Activated CD4-positive, alpha-beta T cell treated with anti-CD3 and anti-CD28 coated beads for 36 hours (primary cell): ENCODE measurements at regions of chr2 and their contacts with region 1.

Region 1: DNA sequence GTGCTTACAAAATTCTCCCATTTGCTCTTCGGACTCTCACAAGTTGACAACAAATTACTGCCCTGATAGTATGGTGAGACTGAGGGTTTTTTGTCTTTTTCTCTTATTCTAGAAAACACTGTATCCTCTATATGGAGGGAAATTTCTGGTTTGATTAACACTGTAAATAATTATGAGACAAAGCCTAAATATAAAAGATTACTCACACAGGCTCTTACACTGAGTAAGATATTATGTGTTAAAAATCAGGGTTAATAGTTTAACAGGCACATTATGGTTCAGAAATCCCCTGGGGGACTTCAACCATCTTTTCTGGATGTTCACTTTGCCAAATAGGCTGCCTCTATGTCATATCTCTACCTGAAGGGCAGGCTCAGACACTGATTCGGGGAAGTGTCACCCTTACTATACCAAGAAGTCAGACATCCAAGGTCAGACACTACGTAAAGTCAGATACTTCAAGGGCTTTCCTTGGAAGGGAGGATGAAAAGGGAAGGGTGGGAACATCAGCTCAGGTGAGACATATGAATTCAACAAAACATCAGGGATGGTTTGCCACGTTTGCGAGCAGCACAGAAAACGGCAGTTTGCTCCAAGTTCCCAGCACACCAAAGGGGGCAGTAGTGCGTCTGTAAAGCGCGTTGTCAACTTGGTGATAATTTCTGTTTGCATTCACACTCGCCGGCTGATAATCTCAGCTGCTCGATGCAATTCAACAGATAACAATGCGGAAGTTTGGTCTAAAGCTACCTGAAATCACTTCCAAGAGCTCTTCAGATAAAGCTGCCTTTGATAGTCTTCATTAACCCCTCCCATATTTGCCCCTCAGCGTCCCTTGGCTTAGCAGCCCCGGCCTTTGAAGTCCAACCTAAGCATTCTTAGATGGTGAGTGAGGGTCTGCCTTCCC is 972 bp upstream of the RASGRP3 start:
- DNase-seq: peak; percentile 88
- ATAC-seq: peak; percentile 67
- H3K4me3 Mint-ChIP-seq: peak overlapping the region; percentile 83
- H3K27ac Mint-ChIP-seq: peak overlapping the region; percentile 98
- H3K4me1 Mint-ChIP-seq: peaks cover 32% of the 10 kb centered on the region
- H3K27me3 Mint-ChIP-seq: no peaks in the 10 kb centered on the region

Region 2: GRCh38 chr2:32356735-32357644 is 1118.5 kb before region 1 on chr2 and contains the start of gene BIRC6:
- CTCF ChIA-PET with region 1: no interaction called
- POLR2A ChIA-PET with region 1: no interaction called
- intact Hi-C with region 1: loop called in 1 of 2 experiments (anchors 2 kb)
- DNase-seq: peak; percentile 98
- ATAC-seq: peak; percentile 94
- H3K4me3 Mint-ChIP-seq: peak within 1 kb of the TSS; percentile 78
- H3K27ac Mint-ChIP-seq: peak within 1 kb of the TSS; percentile 93
- H3K4me1 Mint-ChIP-seq: peaks cover 37% of the 10 kb centered on the region
- H3K27me3 Mint-ChIP-seq: no peaks in the 10 kb centered on the region
- total RNA-seq, gene BIRC6: 66.1 to 70.1 TPM

Region 3: GRCh38 chr2:33488715-33489540 is 13.5 kb after region 1 on chr2:
- CTCF ChIA-PET with region 1: interaction called, 17 read pairs
- POLR2A ChIA-PET with region 1: interaction called, 4 read pairs
- intact Hi-C with region 1: loop called in 1 of 2 experiments (anchors 1 kb)
- DNase-seq: no peak
- ATAC-seq: peak; percentile 64
- H3K4me3 Mint-ChIP-seq: no peak overlapping the region
- H3K27ac Mint-ChIP-seq: peak overlapping the region; percentile 4
- H3K4me1 Mint-ChIP-seq: peaks cover 22% of the 10 kb centered on the region
- H3K27me3 Mint-ChIP-seq: peaks cover 4% of the 10 kb centered on the region

Region 4: DNA sequence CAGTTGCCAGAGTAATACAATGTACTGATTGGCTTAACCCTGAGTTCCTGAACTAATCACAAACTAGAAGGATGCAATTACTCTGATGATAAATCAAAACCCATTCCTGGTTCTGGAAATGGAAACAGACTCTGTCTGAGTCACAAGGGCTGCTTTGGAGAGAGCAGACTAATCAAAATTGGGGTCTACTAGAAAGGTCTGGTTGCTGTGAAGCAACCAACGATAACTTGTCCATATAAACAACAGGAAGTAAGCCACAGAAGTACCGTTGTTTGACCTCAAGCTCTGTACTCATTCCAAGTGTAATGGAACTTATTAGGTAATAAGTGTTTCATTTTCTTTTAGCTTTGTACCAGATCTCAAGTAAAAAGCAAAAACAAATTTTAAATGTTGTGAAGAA is 50.7 kb after region 1 on chr2:
- CTCF ChIA-PET with region 1: no interaction called
- POLR2A ChIA-PET with region 1: no interaction called
- intact Hi-C with region 1: loop called in 1 of 2 experiments (anchors 2 kb)
- DNase-seq: no peak
- ATAC-seq: peak; percentile 47
- H3K4me3 Mint-ChIP-seq: no peak overlapping the region
- H3K27ac Mint-ChIP-seq: no peak overlapping the region
- H3K4me1 Mint-ChIP-seq: peaks cover 4% of the 10 kb centered on the region
- H3K27me3 Mint-ChIP-seq: no peaks in the 10 kb centered on the region

Region 5: GRCh38 chr2:33599175-33599942 is 123.9 kb after region 1 on chr2 and contains the start of gene FAM98A:
- CTCF ChIA-PET with region 1: interaction called, 8 read pairs
- POLR2A ChIA-PET with region 1: interaction called, 4 read pairs
- intact Hi-C with region 1: loop called (anchors 1 kb)
- DNase-seq: peak; percentile 99
- ATAC-seq: peak; percentile 91
- H3K4me3 Mint-ChIP-seq: peak within 1 kb of the TSS; percentile 88
- H3K27ac Mint-ChIP-seq: peak within 1 kb of the TSS; percentile 93
- H3K4me1 Mint-ChIP-seq: peaks cover 24% of the 10 kb centered on the region
- H3K27me3 Mint-ChIP-seq: no peaks in the 10 kb centered on the region
- total RNA-seq, gene FAM98A: 42.9 to 61.5 TPM